Head of caudate nucleus (tissue), 42 donors: ENCODE measurements at regions of chr5 and their contacts with region 1.

Region 1: DNA sequence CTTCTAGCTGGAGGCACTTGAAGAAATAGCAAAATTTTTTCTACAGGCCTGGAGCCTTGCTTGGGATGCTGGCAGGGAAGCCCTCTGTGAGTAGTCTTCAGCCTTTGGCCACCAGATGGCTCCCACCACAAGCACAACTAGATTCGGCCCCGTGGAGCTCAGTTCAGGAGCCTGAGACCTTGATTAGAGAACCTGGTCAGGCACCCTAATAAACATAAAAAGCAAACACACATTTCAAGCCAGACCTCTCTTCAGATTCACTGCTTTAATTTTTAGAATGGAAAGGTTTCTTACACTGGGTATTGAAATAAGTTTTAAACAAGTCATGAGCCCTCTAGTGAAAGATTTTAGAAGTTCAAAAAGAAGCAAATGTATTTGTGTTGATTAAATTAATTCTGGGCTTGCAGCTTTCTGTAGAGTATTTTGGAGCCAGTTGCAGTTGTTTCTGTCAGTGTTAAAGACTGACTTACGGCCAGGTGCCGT is 41.4 kb downstream of the GLRX start:
- DNase-seq: peak; percentile 60 to 91 (median 80)

Region 2: GRCh38 chr5:95730730-95731570 is 50.2 kb before region 1 on chr5 and contains the start of gene RHOBTB3:
- intact Hi-C with region 1: loop called (anchors 5 kb)
- DNase-seq: peak; percentile 77 to 96 (median 90)

Region 3: DNA sequence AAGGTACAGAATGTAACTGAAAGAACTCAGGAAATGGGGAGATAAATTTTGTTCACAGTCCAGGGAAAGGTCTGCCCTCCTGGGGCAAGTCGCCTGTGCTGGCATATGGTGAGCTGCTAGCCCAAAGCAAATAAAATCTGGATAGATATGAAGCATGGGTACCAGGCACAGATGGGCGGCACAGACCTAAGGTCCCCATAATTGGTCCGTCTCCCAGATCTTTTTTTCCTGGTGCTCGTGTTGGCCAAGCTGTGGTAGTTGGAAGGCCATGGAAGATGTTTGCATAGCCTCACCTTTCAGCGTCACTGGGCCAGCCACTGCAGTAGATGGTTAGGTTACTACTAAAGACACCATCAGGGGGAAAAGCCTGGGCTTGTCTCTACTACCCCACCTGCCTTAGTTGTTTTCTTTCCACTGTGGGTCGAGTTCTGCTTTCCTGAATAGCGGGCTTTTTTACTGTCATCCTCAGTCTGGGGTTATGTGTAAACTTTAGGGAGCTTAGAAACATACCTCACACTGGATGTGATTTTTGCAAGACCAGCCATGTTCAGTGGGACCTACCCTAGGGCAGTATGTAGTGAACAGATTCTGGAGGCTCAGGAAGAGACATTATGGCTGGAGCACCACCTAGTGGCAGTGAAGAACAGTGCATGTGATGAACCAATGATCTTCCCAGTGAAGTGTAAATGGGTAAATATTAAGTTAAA is 65.6 kb after region 1 on chr5:
- intact Hi-C with region 1: loop called (anchors 5 kb)
- DNase-seq: peak in 41 of 42 donors; percentile 42 to 94 (median 83)

Region 4: DNA sequence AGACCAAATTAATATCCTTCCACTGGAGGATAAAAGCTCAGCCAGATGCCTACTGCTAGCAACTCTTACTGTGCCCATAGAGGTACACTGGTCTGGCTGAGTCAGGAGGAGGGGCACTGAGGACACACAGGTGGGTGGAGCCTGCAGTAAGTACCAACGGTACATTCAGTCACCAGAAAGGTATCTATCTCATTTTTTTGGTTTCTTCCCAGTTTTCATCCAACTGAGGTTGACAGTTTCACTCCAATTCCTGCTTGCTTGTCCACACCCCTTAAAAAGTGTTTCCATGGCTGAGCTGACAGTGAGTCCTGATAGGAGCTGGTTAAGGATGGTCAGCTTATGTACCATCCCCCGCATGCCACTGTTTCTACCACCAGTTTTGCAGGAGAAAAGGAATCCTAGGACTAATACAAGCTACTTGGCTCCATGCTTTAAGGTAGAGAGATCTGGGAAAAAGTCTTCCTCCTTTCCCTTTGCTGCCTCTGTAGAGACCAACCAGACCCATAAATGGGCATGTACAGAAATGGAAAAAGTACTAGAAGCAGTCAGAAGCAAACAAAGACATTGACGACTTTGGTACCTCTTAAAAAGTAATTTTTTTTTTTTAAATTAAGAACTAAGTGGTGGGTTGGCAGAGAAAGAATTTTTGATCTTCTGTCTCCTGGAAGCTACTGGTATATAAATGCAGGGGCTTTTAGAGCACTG is 177.3 kb after region 1 on chr5:
- intact Hi-C with region 1: no loop called
- DNase-seq: no peak

Region 5: DNA sequence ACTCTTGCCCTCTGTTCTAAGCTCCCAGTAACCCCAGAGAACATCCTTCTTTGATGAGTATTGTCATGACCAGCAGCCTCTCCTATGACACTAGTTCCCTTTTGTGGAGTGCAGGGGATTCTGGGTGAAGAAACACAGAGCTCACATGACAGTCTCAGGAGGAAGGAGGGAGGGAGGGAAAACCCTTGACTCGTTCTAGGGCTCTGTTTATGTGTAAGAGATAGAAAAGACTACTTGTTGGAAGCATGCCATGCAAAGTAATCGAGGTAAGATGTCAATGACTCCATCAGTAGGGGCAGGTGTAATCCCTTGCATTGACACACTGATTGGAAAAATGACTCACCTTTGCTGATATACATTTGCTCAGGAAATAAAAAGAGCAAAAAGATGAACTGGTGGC is 370.7 kb after region 1 on chr5:
- intact Hi-C with region 1: no loop called
- DNase-seq: peak in 2 of 42 donors; percentile 24 to 36